Caco-2 (cell line): ENCODE measurements at regions of chr14 and their contacts with region 1.

Region 1: GRCh38 chr14:75176142-75176820 is at the start of gene TMED10:
- DNase-seq: peak; percentile 90 to 91
- H3K4me3 ChIP-seq: peak within 1 kb of the TSS; percentile 91
- H3K4me3 Mint-ChIP-seq: peak within 1 kb of the TSS; percentile 99
- H3K27ac Mint-ChIP-seq: peak within 1 kb of the TSS; percentile 99
- H3K4me1 ChIP-seq: no peaks in the 10 kb centered on the region
- H3K4me1 Mint-ChIP-seq: peaks cover 12% of the 10 kb centered on the region
- H3K27me3 ChIP-seq: no peaks in the 10 kb centered on the region
- H3K27me3 Mint-ChIP-seq: no peaks in the 10 kb centered on the region
- CTCF ChIP-seq: peak in 1 of 2 experiments; percentile 15
- total RNA-seq, gene TMED10: 236 and 255 TPM in 2 replicates

Region 2: DNA sequence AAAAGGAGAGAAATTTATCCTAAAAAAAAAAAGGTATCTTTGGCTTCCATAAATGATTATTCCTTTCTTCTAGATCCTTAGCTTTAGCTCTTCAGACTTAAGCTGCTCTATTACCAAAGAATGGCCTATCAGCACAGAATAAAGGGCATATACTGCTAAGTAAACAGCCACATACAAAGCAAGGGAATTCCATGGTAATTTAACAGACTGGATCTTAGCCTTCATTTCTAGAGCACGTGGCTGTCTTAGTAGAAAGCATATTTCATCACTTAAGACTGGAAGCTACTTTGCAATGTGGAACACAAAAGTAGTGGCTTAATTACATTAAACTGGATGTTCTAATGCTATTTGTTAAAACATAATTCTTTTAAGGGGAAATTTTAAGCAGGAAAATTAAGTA is 23.0 kb before region 1 on chr14:
- CTCF ChIA-PET with region 1: interaction called, 3 read pairs
- POLR2A ChIA-PET with region 1: no interaction called
- intact Hi-C with region 1: loop called (anchors 2 kb)
- DNase-seq: peak in 1 of 2 experiments; percentile 22
- H3K4me3 ChIP-seq: no peak overlapping the region
- H3K4me3 Mint-ChIP-seq: no peak overlapping the region
- H3K27ac Mint-ChIP-seq: no peak overlapping the region
- H3K4me1 ChIP-seq: 0 out of 2 replicates have a peak, but pooled peaks cover 15% of the 10 kb centered on the region
- H3K4me1 Mint-ChIP-seq: peaks cover 17% of the 10 kb centered on the region
- H3K27me3 ChIP-seq: no peaks in the 10 kb centered on the region
- H3K27me3 Mint-ChIP-seq: no peaks in the 10 kb centered on the region
- CTCF ChIP-seq: no peak

Region 3: GRCh38 chr14:75278422-75279161 is 102.3 kb after region 1 on chr14 and contains the start of gene FOS:
- CTCF ChIA-PET with region 1: no interaction called
- POLR2A ChIA-PET with region 1: interaction called, 3 read pairs
- intact Hi-C with region 1: loop called (anchors 1 kb)
- DNase-seq: peak; percentile 92 to 95
- H3K4me3 ChIP-seq: peak within 1 kb of the TSS; percentile 96
- H3K4me3 Mint-ChIP-seq: peak within 1 kb of the TSS; percentile 89
- H3K27ac Mint-ChIP-seq: peak within 1 kb of the TSS; percentile 99
- H3K4me1 ChIP-seq: peaks cover 23% of the 10 kb centered on the region
- H3K4me1 Mint-ChIP-seq: peaks cover 14% of the 10 kb centered on the region
- H3K27me3 ChIP-seq: no peaks in the 10 kb centered on the region
- H3K27me3 Mint-ChIP-seq: no peaks in the 10 kb centered on the region
- CTCF ChIP-seq: no peak
- total RNA-seq, gene FOS: 72.7 and 73.7 TPM in 2 replicates